AG04450 (cell line): ENCODE measurements at regions of chr1 and their contacts with region 1.

Region 1: DNA sequence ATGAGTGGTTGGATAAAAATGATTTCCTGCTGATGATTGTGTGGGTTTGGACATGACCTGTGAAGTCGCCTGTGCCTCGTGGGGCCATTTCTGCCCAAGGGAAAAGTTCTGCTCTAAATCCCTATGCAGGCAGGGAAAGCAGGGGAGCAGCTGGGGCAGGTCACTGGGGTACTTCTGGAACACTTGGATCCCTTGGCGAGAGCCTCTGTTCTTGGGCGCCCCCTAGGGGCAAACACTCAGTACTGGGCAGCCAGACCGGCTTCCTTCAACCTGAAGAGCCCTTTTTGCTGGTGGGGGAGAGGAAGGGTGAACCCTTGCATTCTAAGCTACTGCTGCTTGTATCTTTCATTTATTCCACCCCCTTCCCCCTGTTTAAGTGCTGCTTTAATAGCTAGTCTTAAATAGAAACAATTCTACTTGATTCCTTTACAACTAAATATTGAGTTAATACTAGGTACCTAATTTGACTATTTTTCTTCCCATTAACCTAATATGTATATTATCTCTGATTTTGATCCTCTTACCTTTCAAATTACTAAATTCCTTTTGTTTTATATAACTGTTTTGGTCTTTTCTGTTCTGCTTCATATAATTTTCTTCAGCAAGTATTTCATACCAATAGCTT is 5.1 kb upstream of the CLEC20A start:
- DNase-seq: peak; percentile 36
- H3K4me3 ChIP-seq: no peak overlapping the region
- H3K27ac ChIP-seq: no peak overlapping the region
- H3K27me3 ChIP-seq: peaks cover 3% of the 10 kb centered on the region
- CTCF ChIP-seq: peak; percentile 97

Region 2: DNA sequence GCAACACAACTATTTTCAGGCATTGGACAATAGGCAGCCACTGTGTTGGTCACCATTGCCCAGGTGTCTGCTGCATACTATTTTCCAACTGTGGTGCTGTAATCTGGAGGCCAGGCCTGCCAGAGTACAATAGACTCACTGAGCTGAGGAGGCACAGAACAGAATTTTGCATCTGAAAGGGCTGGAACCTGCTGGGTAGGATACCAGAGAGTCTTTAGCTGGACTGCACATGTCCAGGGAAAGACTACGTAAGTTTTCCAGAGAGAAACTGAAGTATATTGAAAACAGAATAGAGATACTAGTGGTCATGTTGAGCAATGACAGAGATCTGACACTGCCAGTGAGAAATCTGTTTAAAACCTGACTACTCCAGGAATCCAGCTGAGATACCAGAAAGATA is 207.2 kb before region 1 on chr1:
- CTCF ChIA-PET with region 1: interaction called, 81 read pairs
- POLR2A ChIA-PET with region 1: no interaction called
- DNase-seq: no peak
- H3K4me3 ChIP-seq: no peak overlapping the region
- H3K27ac ChIP-seq: no peak overlapping the region
- H3K27me3 ChIP-seq: no peaks in the 10 kb centered on the region
- CTCF ChIP-seq: no peak

Region 3: DNA sequence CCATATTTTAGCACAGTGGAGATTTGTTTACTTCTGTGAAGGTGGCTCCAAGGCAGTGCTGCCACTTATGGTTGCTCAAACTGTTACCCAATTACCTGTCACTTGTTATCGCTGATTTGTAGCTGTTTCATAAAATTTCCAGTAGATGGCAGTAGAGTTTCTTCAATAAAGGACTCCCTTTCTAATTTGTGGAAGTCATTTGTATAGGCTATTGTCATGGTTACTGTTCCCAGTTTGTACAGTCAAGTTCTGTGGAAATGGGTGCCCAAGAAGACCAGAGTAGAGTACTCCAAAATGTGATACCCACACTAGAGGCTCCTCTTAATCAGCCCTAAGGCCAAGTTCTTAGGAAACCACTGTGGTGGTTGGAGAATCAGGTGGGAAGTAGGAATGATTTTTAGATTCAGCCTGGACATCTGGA is 191.1 kb before region 1 on chr1:
- CTCF ChIA-PET with region 1: interaction called, 187 read pairs
- POLR2A ChIA-PET with region 1: no interaction called
- DNase-seq: peak; percentile 21
- H3K4me3 ChIP-seq: no peak overlapping the region
- H3K27ac ChIP-seq: no peak overlapping the region
- H3K27me3 ChIP-seq: no peaks in the 10 kb centered on the region
- CTCF ChIP-seq: peak; percentile 75

Region 4: GRCh38 chr1:178379807-178380206 is 122.0 kb before region 1 on chr1:
- CTCF ChIA-PET with region 1: interaction called, 11 read pairs
- POLR2A ChIA-PET with region 1: no interaction called
- DNase-seq: no peak
- H3K4me3 ChIP-seq: no peak overlapping the region
- H3K27ac ChIP-seq: no peak overlapping the region
- H3K27me3 ChIP-seq: no peaks in the 10 kb centered on the region
- CTCF ChIP-seq: peak; percentile 25; the same call in 1 of the 2 replicates

Region 5: GRCh38 chr1:178470411-178470960 is 31.3 kb before region 1 on chr1:
- CTCF ChIA-PET with region 1: interaction called, 42 read pairs
- POLR2A ChIA-PET with region 1: no interaction called
- DNase-seq: no peak
- H3K4me3 ChIP-seq: no peak overlapping the region
- H3K27ac ChIP-seq: no peak overlapping the region
- H3K27me3 ChIP-seq: no peaks in the 10 kb centered on the region
- CTCF ChIP-seq: no peak

Region 6: GRCh38 chr1:178486100-178487069 is 15.4 kb before region 1 on chr1:
- CTCF ChIA-PET with region 1: interaction called, 38 read pairs
- POLR2A ChIA-PET with region 1: no interaction called
- DNase-seq: no peak
- H3K4me3 ChIP-seq: no peak overlapping the region
- H3K27ac ChIP-seq: no peak overlapping the region
- H3K27me3 ChIP-seq: no peaks in the 10 kb centered on the region
- CTCF ChIP-seq: no peak

Region 7: GRCh38 chr1:178532392-178532791 is 30.6 kb after region 1 on chr1:
- CTCF ChIA-PET with region 1: interaction called, 19 read pairs
- POLR2A ChIA-PET with region 1: no interaction called
- DNase-seq: peak; percentile 63
- H3K4me3 ChIP-seq: no peak overlapping the region
- H3K27ac ChIP-seq: no peak overlapping the region
- H3K27me3 ChIP-seq: no peaks in the 10 kb centered on the region
- CTCF ChIP-seq: peak; percentile 90

Region 8: DNA sequence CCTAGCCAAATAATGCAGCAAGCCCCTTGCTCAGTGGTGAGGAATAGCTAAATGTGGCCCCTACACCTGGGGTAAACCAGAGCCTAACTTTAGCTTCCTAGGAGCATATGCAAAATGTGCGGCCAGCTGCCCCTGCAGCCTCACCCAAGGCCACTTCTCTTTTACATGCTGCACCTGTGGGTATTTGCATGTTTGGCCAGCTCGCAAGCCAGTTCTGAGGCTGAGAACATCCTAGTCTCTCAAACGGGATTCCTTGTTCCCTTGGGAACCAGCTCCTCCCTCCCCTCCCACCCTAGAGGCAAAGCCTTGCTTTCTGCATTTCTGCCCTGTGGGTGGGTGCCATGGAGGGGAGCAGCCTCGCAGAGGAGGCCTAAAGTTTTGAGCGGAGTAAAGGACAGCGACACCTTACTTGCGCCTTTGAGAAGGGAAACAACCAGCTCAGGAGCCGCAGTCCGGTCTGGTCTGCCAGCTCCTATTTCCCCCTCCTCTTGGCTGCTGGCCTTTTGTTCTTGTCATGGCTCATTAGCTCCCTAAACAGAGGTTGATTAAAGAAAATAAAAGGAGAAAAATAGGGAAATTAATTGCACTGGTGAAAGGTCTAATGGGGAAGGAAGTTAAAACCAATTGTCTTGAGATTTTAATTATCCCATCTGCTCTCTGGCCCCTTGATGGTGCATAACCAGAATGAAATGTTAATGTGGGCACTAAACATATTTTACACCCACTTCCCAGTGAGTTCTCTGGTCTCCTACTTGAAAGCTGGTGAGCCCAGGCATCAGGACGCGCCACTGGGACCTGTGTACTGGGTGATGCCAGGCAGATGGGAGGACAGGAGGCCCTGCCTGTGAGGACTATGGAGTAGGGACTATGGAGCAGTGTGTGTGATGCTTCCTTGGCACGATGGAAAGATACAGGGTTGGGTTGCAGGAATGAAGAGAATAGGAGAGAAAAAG is 79.8 kb after region 1 on chr1:
- CTCF ChIA-PET with region 1: no interaction called
- POLR2A ChIA-PET with region 1: no interaction called
- DNase-seq: no peak
- H3K4me3 ChIP-seq: no peak overlapping the region
- H3K27ac ChIP-seq: no peak overlapping the region
- H3K27me3 ChIP-seq: no peaks in the 10 kb centered on the region
- CTCF ChIP-seq: no peak

Region 9: GRCh38 chr1:178594133-178594532 is 92.3 kb after region 1 on chr1:
- CTCF ChIA-PET with region 1: no interaction called
- POLR2A ChIA-PET with region 1: no interaction called
- DNase-seq: no peak
- H3K4me3 ChIP-seq: no peak overlapping the region
- H3K27ac ChIP-seq: no peak overlapping the region
- H3K27me3 ChIP-seq: no peaks in the 10 kb centered on the region
- CTCF ChIP-seq: no peak